ENCODE measurements at regions of chr13 and their contacts with region 1.

Region 1: DNA sequence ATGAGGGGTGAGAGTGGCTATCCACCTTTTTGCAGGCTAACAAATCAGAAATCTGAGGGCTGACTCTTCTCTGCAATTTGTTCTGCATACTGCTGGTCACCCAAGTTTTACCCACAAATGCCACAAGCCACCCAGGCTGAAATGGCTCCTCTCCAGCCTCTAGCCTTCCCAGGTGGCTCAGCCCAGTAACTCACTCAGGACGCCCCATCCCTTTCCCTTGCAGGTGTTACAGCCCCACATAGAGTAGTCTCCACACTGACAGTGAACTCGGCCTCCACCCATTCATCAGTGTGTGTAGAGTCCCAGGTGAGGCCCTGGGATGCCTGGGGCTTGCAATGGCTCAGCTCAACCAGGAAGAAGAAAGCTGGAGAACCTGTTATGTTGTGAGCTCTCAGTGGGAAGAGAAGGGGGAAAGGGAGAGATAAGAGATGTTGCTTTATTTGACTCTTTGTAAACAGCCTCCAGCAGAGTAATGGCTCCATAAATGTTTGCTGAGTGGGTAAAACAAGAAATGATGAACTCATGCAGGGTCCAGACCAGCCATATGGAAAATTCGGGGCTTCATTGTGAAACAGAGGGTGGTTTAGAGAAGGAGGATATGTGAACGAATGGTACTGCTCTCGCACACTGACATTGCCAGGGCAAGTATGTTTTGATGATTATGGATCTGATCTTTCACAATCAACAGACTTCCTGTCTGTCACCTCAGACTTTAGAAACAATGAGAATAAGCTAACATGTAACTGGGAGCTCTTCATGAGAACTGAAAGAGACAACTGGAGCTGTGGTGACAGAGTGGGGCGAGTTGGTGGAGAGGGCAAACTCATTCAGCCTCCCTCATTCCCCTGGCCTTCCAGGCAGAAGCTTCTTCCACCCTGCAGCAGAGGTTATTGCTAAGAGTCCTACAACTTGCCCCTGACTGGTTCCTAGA is 74.2 kb upstream of the RFC3 start:
- DNase-seq: peak; percentile 13
- H3K4me3 Mint-ChIP-seq: peak overlapping the region; percentile 48
- H3K27ac Mint-ChIP-seq: peak overlapping the region; percentile 80
- H3K4me1 Mint-ChIP-seq: peaks cover 26% of the 10 kb centered on the region
- H3K27me3 Mint-ChIP-seq: no peaks in the 10 kb centered on the region

Region 2: GRCh38 chr13:33690354-33690753 is 53.3 kb before region 1 on chr13:
- intact Hi-C with region 1: no loop called
- DNase-seq: no peak
- H3K4me3 Mint-ChIP-seq: no peak overlapping the region
- H3K27ac Mint-ChIP-seq: peak overlapping the region; percentile 35
- H3K4me1 Mint-ChIP-seq: peaks cover 11% of the 10 kb centered on the region
- H3K27me3 Mint-ChIP-seq: no peaks in the 10 kb centered on the region

Region 3: GRCh38 chr13:33817901-33818706 is 74.4 kb after region 1 on chr13 and contains the start of gene RFC3:
- intact Hi-C with region 1: loop called (anchors 5 kb)
- DNase-seq: peak; percentile 90
- H3K4me3 Mint-ChIP-seq: peak within 1 kb of the TSS; percentile 99
- H3K27ac Mint-ChIP-seq: peak within 1 kb of the TSS; percentile 96
- H3K4me1 Mint-ChIP-seq: peaks cover 37% of the 10 kb centered on the region
- H3K27me3 Mint-ChIP-seq: peaks cover 3% of the 10 kb centered on the region
- total RNA-seq, gene RFC3: 55.2 and 55.4 TPM in 2 replicates